CD8-positive, alpha-beta T cell (primary cell): ENCODE measurements at regions of chr19 and their contacts with region 1.

Region 1: DNA sequence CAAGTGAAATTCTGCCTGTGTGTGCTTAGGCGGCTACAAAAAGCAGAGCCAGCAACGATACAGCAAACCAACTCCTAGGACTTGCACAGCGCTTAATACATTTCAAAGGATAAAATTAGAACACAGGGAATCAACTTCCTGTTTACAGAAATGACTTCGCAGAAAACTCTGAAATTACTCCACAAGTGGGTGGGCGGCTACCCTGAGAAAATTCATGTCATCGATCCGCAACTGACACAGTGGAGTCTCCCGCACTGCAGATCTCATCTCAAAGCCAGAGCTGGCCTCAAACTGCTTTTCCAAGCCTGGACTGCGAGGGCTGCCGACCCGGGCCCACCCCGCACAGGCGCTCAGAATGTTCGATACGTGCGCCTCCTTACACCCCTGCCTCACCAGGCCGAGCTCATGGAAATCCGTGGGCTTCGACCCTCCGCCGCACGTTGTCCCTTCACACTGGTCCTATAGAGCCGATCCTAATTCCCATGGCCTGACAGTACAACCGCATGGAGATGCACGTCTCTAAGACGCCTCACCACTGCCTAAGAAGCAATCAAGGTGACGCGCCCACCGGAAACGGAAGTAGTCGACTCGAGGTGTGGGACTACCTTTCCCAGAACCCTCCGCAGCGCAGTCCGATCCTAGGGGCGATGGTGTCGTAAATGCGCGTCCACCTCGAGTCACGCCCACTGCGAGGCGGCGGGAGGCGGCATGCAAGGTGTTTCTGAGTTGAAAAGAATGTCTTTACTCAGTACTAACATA is at the start of gene ZNF229:
- DNase-seq: peak; percentile 31 to 85 (median 70)
- ATAC-seq: peak; percentile 98
- H3K4me3 ChIP-seq: peak within 1 kb of the TSS; percentile 46 to 80
- H3K4me3 Mint-ChIP-seq: peak within 1 kb of the TSS; percentile 87
- H3K27ac ChIP-seq: no peak within 1 kb of the TSS
- H3K27ac Mint-ChIP-seq: peak within 1 kb of the TSS; percentile 83
- H3K4me1 ChIP-seq: peaks cover 7% of the 10 kb centered on the region
- H3K4me1 Mint-ChIP-seq: peaks cover 14% of the 10 kb centered on the region
- H3K27me3 ChIP-seq: no peaks in the 10 kb centered on the region
- H3K27me3 Mint-ChIP-seq: peaks cover 3% of the 10 kb centered on the region
- CTCF ChIP-seq: no peak
- total RNA-seq, gene ZNF229: 0.25 to 0.76 TPM

Region 2: DNA sequence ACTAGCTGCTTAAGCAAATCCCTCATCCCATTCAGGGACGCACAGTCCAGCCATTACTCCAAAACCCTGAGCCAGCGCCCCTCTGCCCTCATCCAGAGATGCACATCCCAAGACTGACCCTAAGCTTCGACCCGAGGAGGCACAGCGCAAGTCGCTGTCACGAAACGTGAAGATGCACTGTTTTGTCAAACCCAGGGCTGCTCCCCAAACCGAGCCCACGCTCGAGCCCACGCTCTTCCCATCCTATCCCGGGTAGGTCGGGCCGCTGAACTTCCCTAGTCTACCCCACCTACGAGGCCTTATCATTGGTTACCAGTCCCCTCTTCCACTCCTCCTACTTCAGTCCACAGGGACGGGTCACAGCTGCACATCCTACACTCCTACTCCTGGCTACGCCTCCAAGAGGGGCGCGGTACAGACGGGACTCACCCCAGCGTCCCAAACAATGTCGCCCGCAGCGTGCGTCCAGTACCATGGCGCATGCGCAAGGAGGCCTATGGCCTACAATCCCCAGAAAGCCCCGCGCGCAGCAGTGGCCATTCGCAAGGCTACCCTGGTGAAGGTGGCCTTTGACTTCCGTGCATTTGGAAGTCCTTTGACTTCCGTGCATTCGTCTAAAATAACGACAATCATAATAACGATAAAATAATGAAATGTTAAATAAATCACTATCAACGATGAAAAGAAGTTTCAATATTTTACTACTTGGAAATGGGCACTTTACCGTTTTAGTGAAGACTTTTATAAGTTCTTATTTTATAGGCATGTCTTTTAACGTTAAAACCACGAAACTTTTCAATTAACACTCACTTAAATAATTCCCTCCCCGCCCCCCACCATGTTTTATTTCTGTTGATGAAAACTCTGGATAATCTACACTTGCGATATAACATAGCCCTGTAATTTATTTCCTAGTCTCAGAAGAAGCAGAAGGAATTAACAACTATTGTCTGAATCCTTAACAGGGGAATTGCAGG is 46.7 kb before region 1 on chr19 and contains the start of gene ZNF285:
- CTCF ChIA-PET with region 1: no interaction called
- POLR2A ChIA-PET with region 1: no interaction called
- intact Hi-C with region 1: loop called in 1 of 2 experiments (anchors 5 kb)
- DNase-seq: peak; percentile 36 to 84 (median 76)
- ATAC-seq: peak; percentile 95
- H3K4me3 ChIP-seq: peak within 1 kb of the TSS; percentile 55 to 75
- H3K4me3 Mint-ChIP-seq: peak within 1 kb of the TSS; percentile 98
- H3K27ac ChIP-seq: no peak within 1 kb of the TSS
- H3K27ac Mint-ChIP-seq: peak within 1 kb of the TSS; percentile 88
- H3K4me1 ChIP-seq: peaks cover 6% of the 10 kb centered on the region
- H3K4me1 Mint-ChIP-seq: peaks cover 13% of the 10 kb centered on the region
- H3K27me3 ChIP-seq: no peaks in the 10 kb centered on the region
- H3K27me3 Mint-ChIP-seq: peaks cover 6% of the 10 kb centered on the region
- CTCF ChIP-seq: no peak
- total RNA-seq, gene ZNF285: 0.24 to 0.25 TPM

Region 3: DNA sequence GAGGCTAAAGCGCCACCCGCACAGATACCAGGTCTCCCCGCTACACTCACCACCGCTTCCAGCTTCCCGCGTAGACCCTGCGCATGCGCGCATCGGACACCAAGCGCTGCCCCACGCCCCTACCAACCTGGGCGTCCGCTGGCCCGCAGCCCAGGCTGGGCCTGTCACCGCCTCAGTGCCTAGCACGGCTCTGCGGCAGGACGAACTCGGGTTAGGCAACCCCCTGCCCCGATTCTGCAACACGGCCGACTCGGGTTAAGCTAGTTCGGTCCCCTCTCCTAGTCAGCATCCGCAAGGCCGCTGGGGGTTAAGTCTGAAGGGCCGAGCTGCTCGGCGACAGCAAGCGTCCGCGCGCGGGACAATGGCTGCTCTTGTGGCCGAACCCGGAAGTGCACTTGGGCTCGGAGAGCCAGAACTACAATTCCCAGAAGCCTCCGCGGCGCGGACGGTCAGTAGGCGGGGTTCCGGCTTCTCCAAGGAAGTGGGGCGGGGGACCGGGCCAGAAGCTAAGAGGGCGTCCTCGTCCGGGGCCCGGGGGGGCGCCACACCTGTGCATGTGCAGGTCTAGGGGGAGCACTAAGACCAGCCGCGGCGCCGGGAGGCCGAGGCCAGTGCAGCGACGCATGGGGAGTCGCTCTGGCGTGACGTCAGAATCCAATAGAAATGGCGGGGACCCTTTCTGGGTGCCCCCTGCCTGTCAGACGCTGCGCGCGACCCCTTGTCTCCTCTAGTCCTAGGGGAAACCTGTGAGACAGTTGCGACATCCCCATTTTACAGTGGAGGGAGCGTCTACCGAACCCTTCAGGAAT is 52.3 kb after region 1 on chr19 and contains the start of gene ZNF180:
- CTCF ChIA-PET with region 1: interaction called, 3 read pairs
- POLR2A ChIA-PET with region 1: no interaction called
- intact Hi-C with region 1: loop called in 1 of 2 experiments (anchors 2 kb)
- DNase-seq: peak; percentile 89 to 98 (median 96)
- ATAC-seq: peak; percentile 96
- H3K4me3 ChIP-seq: peak within 1 kb of the TSS; percentile 86 to 90
- H3K4me3 Mint-ChIP-seq: peak within 1 kb of the TSS; percentile 92
- H3K27ac ChIP-seq: peak within 1 kb of the TSS; percentile 60 to 77
- H3K27ac Mint-ChIP-seq: peak within 1 kb of the TSS; percentile 92
- H3K4me1 ChIP-seq: peaks cover 21% of the 10 kb centered on the region
- H3K4me1 Mint-ChIP-seq: peaks cover 34% of the 10 kb centered on the region
- H3K27me3 ChIP-seq: no peaks in the 10 kb centered on the region
- H3K27me3 Mint-ChIP-seq: peaks cover 10% of the 10 kb centered on the region
- CTCF ChIP-seq: peak; percentile 35
- total RNA-seq, gene ZNF180: 8.5 to 8.8 TPM